ENCODE measurements at regions of chr1 and their contacts with region 1.

Region 1: DNA sequence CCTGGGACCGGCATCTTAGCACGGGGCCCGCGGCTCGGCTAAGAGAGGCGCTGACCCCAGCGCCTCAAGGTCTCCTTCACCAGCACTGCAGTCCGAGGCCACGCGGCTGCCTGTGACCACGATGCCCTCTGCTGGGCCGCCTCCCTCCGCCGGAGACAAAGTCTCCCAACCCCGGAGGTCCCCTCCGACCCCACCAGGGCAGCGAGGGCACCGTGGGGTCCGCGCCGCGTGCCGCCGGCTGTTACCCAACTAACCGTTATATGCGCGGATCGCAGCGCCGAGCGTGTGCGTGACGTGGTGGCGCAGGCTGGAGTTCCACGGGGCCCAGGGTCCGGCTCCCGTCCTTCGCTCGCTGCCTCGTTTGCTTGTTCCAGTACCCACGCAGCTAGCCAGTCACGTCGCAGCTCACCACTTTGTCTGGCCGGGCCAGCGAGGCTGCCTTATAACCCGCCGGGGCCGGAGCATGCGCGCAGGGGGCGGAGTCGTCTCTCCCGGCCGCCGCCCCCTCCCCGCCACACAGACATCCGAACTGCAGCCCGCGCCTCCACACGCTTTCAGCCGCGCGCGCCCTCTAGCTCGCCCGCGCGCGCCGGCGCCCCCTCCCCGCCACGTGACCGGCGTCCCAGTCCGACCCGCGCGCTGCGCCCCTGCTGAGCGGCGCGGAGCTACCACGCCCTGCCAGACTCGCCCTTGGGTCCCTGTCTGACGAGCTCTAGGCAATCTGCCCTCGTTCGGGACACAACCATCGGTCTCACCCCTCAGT is at the start of gene SLC16A1:
- DNase-seq: peak; percentile 93
- H3K4me3 Mint-ChIP-seq: peak within 1 kb of the TSS; percentile 78
- H3K27ac Mint-ChIP-seq: peak within 1 kb of the TSS; percentile 91
- H3K4me1 Mint-ChIP-seq: peaks cover 48% of the 10 kb centered on the region
- H3K27me3 Mint-ChIP-seq: no peaks in the 10 kb centered on the region
- CTCF ChIP-seq: peak; percentile 15
- total RNA-seq, gene SLC16A1: 142 and 148 TPM in 2 replicates

Region 2: DNA sequence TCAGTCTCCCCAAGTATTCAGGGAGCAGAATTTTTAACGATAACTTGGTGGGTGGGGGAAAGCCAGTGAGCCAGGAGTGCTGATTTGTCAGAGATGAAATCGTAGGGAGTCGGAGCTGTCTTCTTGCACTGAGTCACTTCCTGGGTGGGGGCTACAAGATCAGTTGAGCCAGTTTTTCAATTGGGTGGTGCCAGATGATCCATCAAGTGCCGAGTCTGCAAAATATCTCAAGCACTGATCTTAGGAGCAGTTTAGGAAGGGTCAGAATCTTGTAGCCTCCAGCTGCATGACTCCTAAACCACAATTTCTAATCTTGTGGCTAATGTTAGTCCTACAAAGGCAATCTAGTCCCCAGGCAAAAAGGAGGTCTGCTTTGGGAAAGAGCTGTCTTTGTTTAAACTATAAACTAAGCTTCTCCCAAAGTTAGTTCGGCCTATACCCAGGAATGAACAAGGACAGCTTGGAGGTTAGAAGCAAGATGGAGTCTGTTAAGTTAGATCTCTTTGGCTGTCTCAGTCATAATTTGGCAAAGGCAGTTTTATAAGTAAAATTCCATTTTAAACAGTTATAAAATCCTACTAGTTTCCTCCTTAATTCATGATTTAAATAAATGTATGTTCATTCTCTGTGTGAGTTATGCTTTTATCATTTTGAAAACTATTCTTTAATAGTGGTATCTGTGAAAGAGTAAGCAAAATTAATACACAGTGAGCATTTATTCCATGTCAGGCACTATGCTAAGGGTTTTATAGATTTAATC is 51.7 kb before region 1 on chr1:
- CTCF ChIA-PET with region 1: interaction called, 4 read pairs
- POLR2A ChIA-PET with region 1: interaction called, 55 read pairs
- intact Hi-C with region 1: no loop called
- DNase-seq: peak; percentile 89
- H3K4me3 Mint-ChIP-seq: peak overlapping the region; percentile 24
- H3K27ac Mint-ChIP-seq: peak overlapping the region; percentile 92
- H3K4me1 Mint-ChIP-seq: peaks cover 35% of the 10 kb centered on the region
- H3K27me3 Mint-ChIP-seq: no peaks in the 10 kb centered on the region
- CTCF ChIP-seq: no peak

Region 3: GRCh38 chr1:112935461-112936289 is 20.3 kb before region 1 on chr1:
- CTCF ChIA-PET with region 1: interaction called, 29 read pairs
- POLR2A ChIA-PET with region 1: interaction called, 287 read pairs
- intact Hi-C with region 1: loop called (anchors 1 kb)
- DNase-seq: peak; percentile 70
- H3K4me3 Mint-ChIP-seq: peak overlapping the region; percentile 26
- H3K27ac Mint-ChIP-seq: peak overlapping the region; percentile 68
- H3K4me1 Mint-ChIP-seq: peaks cover 28% of the 10 kb centered on the region
- H3K27me3 Mint-ChIP-seq: no peaks in the 10 kb centered on the region
- CTCF ChIP-seq: no peak

Region 4: DNA sequence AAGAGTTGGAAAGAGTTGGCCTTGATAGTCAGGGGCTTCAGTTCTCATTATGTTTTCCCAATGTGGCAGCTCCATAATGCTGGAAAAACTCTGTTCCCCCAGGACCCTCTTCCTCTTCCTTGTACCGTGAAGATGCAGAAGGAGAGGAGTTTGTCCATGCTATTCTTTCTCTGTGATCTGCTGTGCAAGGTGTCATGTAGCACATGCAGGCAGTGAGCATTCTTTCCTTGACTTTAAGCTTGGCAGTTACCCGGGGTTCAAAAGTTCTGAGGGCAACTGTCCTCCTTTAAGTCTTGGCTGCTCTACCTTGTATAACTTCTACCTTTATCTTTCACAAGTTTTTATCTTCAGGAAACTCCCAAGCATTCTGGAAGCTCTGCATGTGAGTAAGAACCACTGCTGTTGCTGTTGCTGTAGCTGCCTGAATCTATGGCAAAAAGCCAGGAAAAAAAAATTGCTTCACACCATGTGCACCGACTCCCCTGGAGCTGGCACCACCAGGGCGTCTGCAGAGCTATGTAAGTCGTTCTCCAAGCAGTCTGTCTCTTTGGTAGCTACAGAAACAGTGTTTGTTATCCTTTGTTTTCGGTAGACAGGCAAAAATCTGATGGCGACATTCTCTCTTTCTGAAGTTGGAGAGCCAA is 42.8 kb after region 1 on chr1:
- CTCF ChIA-PET with region 1: interaction called, 5 read pairs
- POLR2A ChIA-PET with region 1: interaction called, 21 read pairs
- intact Hi-C with region 1: loop called (anchors 5 kb)
- DNase-seq: peak; percentile 89
- H3K4me3 Mint-ChIP-seq: no peak overlapping the region
- H3K27ac Mint-ChIP-seq: peak overlapping the region; percentile 51
- H3K4me1 Mint-ChIP-seq: peaks cover 29% of the 10 kb centered on the region
- H3K27me3 Mint-ChIP-seq: no peaks in the 10 kb centered on the region
- CTCF ChIP-seq: no peak

Region 5: DNA sequence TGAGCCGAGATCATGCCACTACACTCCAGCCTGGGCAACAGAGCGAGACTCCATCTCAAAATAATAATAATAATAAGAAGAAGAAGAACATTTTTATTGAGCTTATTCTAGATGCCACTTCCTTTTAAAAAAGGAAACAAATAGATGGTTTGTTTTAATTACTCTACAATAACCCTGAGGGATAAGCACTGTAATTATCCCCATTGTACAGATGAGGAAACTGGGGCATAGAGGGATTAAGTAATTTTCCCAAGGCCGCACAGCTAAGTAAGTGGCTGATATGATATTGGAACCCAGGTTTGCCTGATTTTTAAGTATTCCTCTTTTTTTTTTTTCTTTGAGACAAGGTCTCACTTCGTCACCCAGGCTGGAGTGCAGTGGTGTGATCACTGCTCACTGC is 58.5 kb after region 1 on chr1:
- CTCF ChIA-PET with region 1: no interaction called
- POLR2A ChIA-PET with region 1: no interaction called
- intact Hi-C with region 1: no loop called
- DNase-seq: no peak
- H3K4me3 Mint-ChIP-seq: no peak overlapping the region
- H3K27ac Mint-ChIP-seq: no peak overlapping the region
- H3K4me1 Mint-ChIP-seq: no peaks in the 10 kb centered on the region
- H3K27me3 Mint-ChIP-seq: no peaks in the 10 kb centered on the region
- CTCF ChIP-seq: no peak

Region 6: DNA sequence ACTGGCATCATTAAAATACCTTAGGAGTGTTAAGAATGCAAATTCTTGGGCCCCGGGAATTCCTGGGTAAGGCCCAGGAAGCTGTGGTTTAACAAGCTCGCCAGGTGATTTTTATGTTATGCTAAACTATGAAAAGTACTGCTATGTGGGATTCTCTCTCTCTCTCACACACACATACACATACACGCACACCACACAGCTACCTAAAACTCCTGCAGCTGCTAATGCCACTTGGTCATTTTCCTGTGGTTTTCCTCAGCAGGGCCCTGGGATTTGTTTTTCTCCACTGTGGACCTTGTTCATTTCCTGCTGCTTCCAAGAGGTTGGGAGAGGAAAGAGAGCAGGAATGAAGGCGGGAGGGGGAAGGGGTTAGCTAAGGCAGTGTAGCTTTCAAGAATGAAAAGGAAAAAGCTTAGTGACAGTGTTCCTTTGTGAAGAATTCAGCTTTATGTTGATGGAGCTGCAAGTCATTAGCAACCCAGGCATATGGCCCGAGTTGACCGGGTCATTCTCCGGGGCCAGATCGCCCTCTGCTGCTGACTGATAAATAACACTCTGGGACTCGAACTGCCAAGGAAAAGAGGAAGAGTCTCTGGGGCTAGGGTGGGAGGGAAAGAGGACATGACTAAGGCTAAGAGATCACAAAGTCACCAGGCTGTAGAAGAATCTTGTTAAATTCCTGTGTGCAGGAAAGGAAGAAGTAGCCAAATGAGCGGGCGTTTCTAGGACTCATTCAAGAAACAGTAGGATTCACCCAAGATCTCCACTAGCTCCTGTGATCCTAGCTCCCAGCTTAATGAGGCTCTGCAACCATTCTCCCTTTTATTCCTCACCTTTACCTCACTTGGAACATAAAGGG is 86.6 kb after region 1 on chr1:
- CTCF ChIA-PET with region 1: interaction called, 11 read pairs
- POLR2A ChIA-PET with region 1: interaction called, 13 read pairs
- intact Hi-C with region 1: loop called (anchors 1 kb)
- DNase-seq: peak; percentile 85
- H3K4me3 Mint-ChIP-seq: no peak overlapping the region
- H3K27ac Mint-ChIP-seq: no peak overlapping the region
- H3K4me1 Mint-ChIP-seq: peaks cover 14% of the 10 kb centered on the region
- H3K27me3 Mint-ChIP-seq: no peaks in the 10 kb centered on the region
- CTCF ChIP-seq: peak; percentile 64